Spleen (tissue), 13 donors: ENCODE measurements at regions of chr2 and their contacts with region 1.

Region 1: GRCh38 chr2:4762951-4763376 is 929.2 kb upstream of the SOX11 start:
- DNase-seq: no peak
- H3K4me3 ChIP-seq: no peak overlapping the region
- H3K27ac ChIP-seq: no peak overlapping the region
- H3K4me1 ChIP-seq: no peaks in the 10 kb centered on the region
- H3K27me3 ChIP-seq: no peaks in the 10 kb centered on the region
- CTCF ChIP-seq: peak in 8 of 11 experiments; percentile 17 to 62 (median 44)
- POLR2A ChIP-seq: no peak

Region 2: DNA sequence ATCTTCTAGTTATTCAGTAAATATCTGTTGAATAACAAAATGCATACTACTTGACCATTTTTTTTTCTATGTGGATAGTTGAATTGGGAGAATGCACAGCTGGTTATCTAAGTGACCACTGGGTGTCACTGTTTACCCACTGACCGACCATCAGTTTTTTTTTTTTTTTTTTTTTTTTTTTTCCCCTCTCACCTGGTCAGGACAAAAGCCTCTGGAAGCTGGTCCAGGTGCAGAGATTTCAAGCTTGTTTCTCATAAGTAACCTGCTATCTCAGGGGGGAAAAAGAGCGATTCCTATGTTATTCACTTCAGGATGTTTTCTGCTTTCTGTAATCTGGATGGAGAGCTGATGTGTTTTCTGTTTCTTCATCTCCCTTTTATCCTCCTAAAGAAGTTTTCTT is 803.6 kb before region 1 on chr2:
- intact Hi-C with region 1: loop called (anchors 5 kb)
- DNase-seq: no peak
- H3K4me3 ChIP-seq: no peak overlapping the region
- H3K27ac ChIP-seq: no peak overlapping the region
- H3K4me1 ChIP-seq: no peaks in the 10 kb centered on the region
- H3K27me3 ChIP-seq: peaks cover 0 to 5% (median 0%) of the 10 kb centered on the region in 7 donors
- CTCF ChIP-seq: peak; percentile 24 to 77 (median 65)
- POLR2A ChIP-seq: no peak

Region 3: GRCh38 chr2:4618141-4618540 is 144.8 kb before region 1 on chr2:
- intact Hi-C with region 1: no loop called
- DNase-seq: no peak
- H3K4me3 ChIP-seq: no peak overlapping the region
- H3K27ac ChIP-seq: no peak overlapping the region
- H3K4me1 ChIP-seq: no peaks in the 10 kb centered on the region
- H3K27me3 ChIP-seq: no peaks in the 10 kb centered on the region
- CTCF ChIP-seq: no peak
- POLR2A ChIP-seq: no peak

Region 4: DNA sequence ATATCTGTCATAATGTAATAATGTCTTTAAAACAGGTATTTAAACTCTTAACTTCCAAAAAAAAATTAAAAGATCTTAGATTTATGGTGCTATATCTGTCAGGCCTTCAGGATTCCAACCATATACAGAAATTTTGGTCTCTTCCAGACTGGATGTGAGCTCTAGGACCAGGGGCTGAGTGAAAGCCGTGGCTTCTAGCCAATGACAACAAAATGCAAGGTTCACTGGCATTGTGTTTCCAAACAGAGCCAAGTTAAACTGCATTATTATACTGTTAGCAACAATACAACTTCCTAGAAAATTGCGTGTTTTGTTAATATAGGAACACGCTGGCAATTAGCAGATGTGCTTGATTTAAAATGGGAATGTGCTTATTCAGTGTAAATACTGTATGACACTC is 119.5 kb after region 1 on chr2:
- intact Hi-C with region 1: no loop called
- DNase-seq: no peak
- H3K4me3 ChIP-seq: no peak overlapping the region
- H3K27ac ChIP-seq: no peak overlapping the region
- H3K4me1 ChIP-seq: no peaks in the 10 kb centered on the region
- H3K27me3 ChIP-seq: no peaks in the 10 kb centered on the region
- CTCF ChIP-seq: no peak
- POLR2A ChIP-seq: no peak